ENCODE measurements at regions of chrX and their contacts with region 1.

Region 1: DNA sequence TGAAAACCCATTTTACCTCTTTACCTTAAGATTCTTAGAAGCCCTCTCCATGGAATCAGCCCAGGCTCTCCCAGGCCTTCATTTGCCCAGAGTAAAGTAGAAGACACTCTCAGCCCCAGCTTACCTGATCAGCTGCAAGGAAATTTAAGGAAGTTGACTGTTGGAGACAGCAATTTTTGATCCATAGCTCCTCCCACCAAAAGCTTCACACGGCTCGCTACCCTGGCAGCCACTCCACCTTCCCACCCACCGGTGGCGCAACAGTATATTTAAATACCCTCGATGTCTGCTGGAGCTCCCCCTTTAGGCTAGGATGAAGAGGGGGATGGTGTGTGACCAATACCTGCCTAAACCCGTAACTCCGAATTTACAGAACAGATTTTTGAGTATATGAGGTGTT is 75.4 kb downstream of the MBNL3 start:
- DNase-seq: peak; percentile 82
- ATAC-seq: peak; percentile 85
- H3K4me3 ChIP-seq: peak overlapping the region; percentile 66 to 74 (median 68); a peak in 5 of 6 replicates
- H3K27ac ChIP-seq: peak overlapping the region; percentile 78
- H3K4me1 ChIP-seq: peaks cover 56% of the 10 kb centered on the region
- H3K27me3 ChIP-seq: no peaks in the 10 kb centered on the region
- CTCF ChIP-seq: peak; percentile 77
- EP300 ChIP-seq: no peak
- POLR2A ChIP-seq: peak in 1 of 2 experiments; percentile 61; a peak in 2 of 4 replicates
- RAD21 ChIP-seq: no peak

Region 2: GRCh38 chrX:132426695-132427281 is 13.3 kb after region 1 on chrX:
- CTCF ChIA-PET with region 1: no interaction called
- POLR2A ChIA-PET with region 1: interaction called, 11 read pairs
- in situ Hi-C with region 1: no loop called
- intact Hi-C with region 1: no loop called
- DNase-seq: no peak
- ATAC-seq: no peak; the same call in 2 of the 3 replicates
- H3K4me3 ChIP-seq: no peak overlapping the region
- H3K27ac ChIP-seq: no peak overlapping the region
- H3K4me1 ChIP-seq: peaks cover 68% of the 10 kb centered on the region
- H3K27me3 ChIP-seq: no peaks in the 10 kb centered on the region
- CTCF ChIP-seq: no peak
- EP300 ChIP-seq: no peak
- POLR2A ChIP-seq: no peak
- RAD21 ChIP-seq: no peak

Region 3: GRCh38 chrX:132433001-132433400 is 19.5 kb after region 1 on chrX:
- CTCF ChIA-PET with region 1: no interaction called
- POLR2A ChIA-PET with region 1: interaction called, 16 read pairs
- in situ Hi-C with region 1: no loop called
- intact Hi-C with region 1: no loop called
- DNase-seq: peak; percentile 68
- ATAC-seq: peak; percentile 90
- H3K4me3 ChIP-seq: peak overlapping the region in 1 of 3 experiments; percentile 33; a peak in 1 of 6 replicates
- H3K27ac ChIP-seq: peak overlapping the region; percentile 77
- H3K4me1 ChIP-seq: peaks cover 67% of the 10 kb centered on the region
- H3K27me3 ChIP-seq: no peaks in the 10 kb centered on the region
- CTCF ChIP-seq: no peak
- EP300 ChIP-seq: no peak
- POLR2A ChIP-seq: no peak
- RAD21 ChIP-seq: no peak

Region 4: GRCh38 chrX:132480581-132481203 is 67.2 kb after region 1 on chrX:
- CTCF ChIA-PET with region 1: no interaction called
- POLR2A ChIA-PET with region 1: interaction called, 10 read pairs
- in situ Hi-C with region 1: loop called (anchors 10 kb)
- intact Hi-C with region 1: loop called (anchors 5 kb)
- DNase-seq: peak; percentile 82
- ATAC-seq: peak; percentile 76
- H3K4me3 ChIP-seq: peak overlapping the region in 1 of 3 experiments; percentile 32; a peak in 3 of 6 replicates
- H3K27ac ChIP-seq: peak overlapping the region; percentile 68
- H3K4me1 ChIP-seq: peaks cover 93% of the 10 kb centered on the region
- H3K27me3 ChIP-seq: no peaks in the 10 kb centered on the region
- CTCF ChIP-seq: no peak
- EP300 ChIP-seq: peak in 1 of 2 experiments; percentile 50; a peak in 1 of 4 replicates
- POLR2A ChIP-seq: peak in 1 of 2 experiments; percentile 36; a peak in 1 of 4 replicates
- RAD21 ChIP-seq: no peak

Region 5: DNA sequence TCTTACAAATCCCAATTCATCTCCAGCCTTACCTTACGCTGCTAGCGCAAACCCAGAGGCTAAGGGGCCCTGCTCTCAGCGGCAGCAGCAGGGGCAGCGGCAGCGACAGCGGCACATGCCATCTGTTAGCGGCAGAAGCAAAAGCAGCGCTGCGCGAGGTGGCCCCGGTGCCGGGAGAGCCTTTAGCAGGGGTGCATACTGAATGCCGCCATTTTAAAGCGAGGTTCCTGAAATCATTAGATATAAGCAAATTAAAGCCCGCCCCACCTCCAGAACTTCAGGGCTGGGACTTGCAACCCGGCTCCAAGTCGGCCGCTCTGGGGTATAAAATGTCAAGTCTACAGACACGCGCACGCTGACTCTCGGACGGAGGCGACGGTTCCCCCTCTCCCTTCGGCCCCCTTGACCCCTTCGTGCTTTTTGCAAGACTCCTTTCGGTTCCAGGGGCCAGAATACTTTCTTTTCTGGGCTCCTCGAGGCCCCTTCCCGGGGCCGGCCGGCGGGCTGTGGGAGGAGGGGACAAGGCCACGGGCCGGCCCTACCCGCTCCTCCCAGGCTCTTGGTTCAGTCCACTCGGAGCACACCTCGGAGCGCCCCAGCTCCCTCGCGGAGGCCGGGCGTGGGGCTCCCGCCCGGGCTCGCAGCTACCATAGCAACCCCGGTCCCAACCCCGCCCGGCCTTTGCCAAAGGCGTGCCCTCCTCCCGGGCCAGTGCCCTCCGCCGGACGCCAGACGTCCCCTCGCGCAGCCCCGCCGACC is 75.5 kb after region 1 on chrX and contains the start of gene MBNL3:
- CTCF ChIA-PET with region 1: no interaction called
- POLR2A ChIA-PET with region 1: interaction called, 7 read pairs
- in situ Hi-C with region 1: loop called (anchors 10 kb)
- intact Hi-C with region 1: loop called (anchors 5 kb)
- DNase-seq: peak; percentile 33
- ATAC-seq: peak; percentile 63
- H3K4me3 ChIP-seq: peak within 1 kb of the TSS; percentile 64 to 73 (median 71)
- H3K27ac ChIP-seq: peak within 1 kb of the TSS; percentile 94
- H3K4me1 ChIP-seq: peaks cover 72% of the 10 kb centered on the region
- H3K27me3 ChIP-seq: no peaks in the 10 kb centered on the region
- CTCF ChIP-seq: no peak
- EP300 ChIP-seq: no peak
- POLR2A ChIP-seq: peak in 1 of 2 experiments; percentile 29; a peak in 2 of 4 replicates
- RAD21 ChIP-seq: no peak
- total RNA-seq, gene MBNL3: 155 and 367 TPM in 2 replicates

Region 6: GRCh38 chrX:132592880-132593279 is 179.4 kb after region 1 on chrX:
- CTCF ChIA-PET with region 1: no interaction called
- POLR2A ChIA-PET with region 1: interaction called, 6 read pairs
- in situ Hi-C with region 1: no loop called
- intact Hi-C with region 1: loop called (anchors 5 kb)
- DNase-seq: peak; percentile 39
- ATAC-seq: peak; percentile 65
- H3K4me3 ChIP-seq: no peak overlapping the region
- H3K27ac ChIP-seq: no peak overlapping the region
- H3K4me1 ChIP-seq: peaks cover 79% of the 10 kb centered on the region
- H3K27me3 ChIP-seq: no peaks in the 10 kb centered on the region
- CTCF ChIP-seq: peak; percentile 65
- EP300 ChIP-seq: no peak
- POLR2A ChIP-seq: no peak
- RAD21 ChIP-seq: peak; percentile 37; the same call in 1 of the 2 replicates

Measured in HepG2 (cell line).